Gastrocnemius medialis (tissue), 4 donors: ENCODE measurements at regions of chr3 and their contacts with region 1.

Region 1: GRCh38 chr3:155196131-155197021 is 97.1 kb downstream of the STRIT1 start:
- DNase-seq: peak; percentile 29 to 37
- ATAC-seq: peak in 1 of 2 donors; percentile 37
- H3K4me3 ChIP-seq: no peak overlapping the region
- H3K27ac ChIP-seq: peak overlapping the region; percentile 92 to 93 (median 92)
- H3K4me1 ChIP-seq: peaks cover 51 to 52% of the 10 kb centered on the region in 2 donors
- H3K27me3 ChIP-seq: no peaks in the 10 kb centered on the region
- CTCF ChIP-seq: no peak
- POLR2A ChIP-seq: no peak

Region 2: DNA sequence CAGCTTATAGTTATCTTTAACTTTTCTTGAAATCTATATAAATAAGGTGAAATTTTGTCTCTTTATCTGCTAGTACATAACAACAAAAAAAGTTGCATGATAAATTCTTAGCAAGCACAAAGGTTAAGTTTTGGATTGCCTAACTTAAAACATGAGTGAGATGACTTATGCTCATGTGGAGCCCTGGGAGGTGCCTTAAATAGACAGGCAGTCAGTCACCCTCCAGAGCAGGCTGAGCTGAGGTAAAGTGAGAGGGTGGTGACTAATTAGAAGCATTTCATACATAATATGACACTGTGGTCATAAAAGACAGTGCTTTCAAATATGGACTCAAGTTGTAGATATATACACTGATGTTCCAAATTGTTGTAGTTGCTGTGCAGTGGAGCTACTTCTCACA is 130.8 kb before region 1 on chr3:
- in situ Hi-C with region 1: no loop called
- intact Hi-C with region 1: loop called (anchors 5 kb)
- DNase-seq: peak; percentile 76 to 87
- ATAC-seq: peak; percentile 96
- H3K4me3 ChIP-seq: no peak overlapping the region
- H3K27ac ChIP-seq: peak overlapping the region; percentile 59 to 91 (median 82)
- H3K4me1 ChIP-seq: peaks cover 7 to 20% of the 10 kb centered on the region in 2 donors
- H3K27me3 ChIP-seq: no peaks in the 10 kb centered on the region
- CTCF ChIP-seq: no peak
- POLR2A ChIP-seq: no peak

Region 3: DNA sequence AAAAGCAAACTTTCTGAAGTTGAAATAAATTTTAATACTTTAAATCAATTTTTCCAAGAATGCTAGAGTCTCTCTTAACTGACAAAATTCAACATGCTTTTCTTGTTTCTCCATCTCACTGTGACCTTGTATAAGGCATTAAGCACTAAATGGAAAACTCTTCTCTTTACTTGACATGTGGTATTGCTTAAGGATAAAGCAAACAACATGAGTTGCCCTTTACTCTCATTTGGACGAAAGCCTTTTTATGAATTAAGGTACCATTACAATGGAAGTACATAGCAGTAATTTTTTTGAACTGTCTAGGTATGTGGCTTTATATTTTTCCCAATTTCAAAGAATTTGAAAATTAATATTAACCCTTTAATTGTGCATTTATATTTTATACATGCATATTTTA is 95.8 kb after region 1 on chr3:
- in situ Hi-C with region 1: no loop called
- intact Hi-C with region 1: loop called (anchors 5 kb)
- DNase-seq: no peak
- ATAC-seq: peak; percentile 60 to 78
- H3K4me3 ChIP-seq: peak overlapping the region; percentile 41 to 62 (median 50)
- H3K27ac ChIP-seq: peak overlapping the region; percentile 79 to 91 (median 86)
- H3K4me1 ChIP-seq: peaks cover 0 to 5% of the 10 kb centered on the region in 2 donors
- H3K27me3 ChIP-seq: no peaks in the 10 kb centered on the region
- CTCF ChIP-seq: no peak
- POLR2A ChIP-seq: no peak

Region 4: GRCh38 chr3:155991212-155991611 is 794.8 kb after region 1 on chr3:
- in situ Hi-C with region 1: no loop called
- intact Hi-C with region 1: no loop called
- DNase-seq: no peak
- ATAC-seq: no peak
- H3K4me3 ChIP-seq: no peak overlapping the region
- H3K27ac ChIP-seq: no peak overlapping the region
- H3K4me1 ChIP-seq: no peaks in the 10 kb centered on the region
- H3K27me3 ChIP-seq: no peaks in the 10 kb centered on the region
- CTCF ChIP-seq: no peak
- POLR2A ChIP-seq: no peak